ENCODE measurements at regions of chr1 and their contacts with region 1.

Region 1: GRCh38 chr1:59947047-59947938 is 20.7 kb upstream of the CYP2J2 start:
- DNase-seq: peak; percentile 63
- ATAC-seq: peak; percentile 99
- H3K4me3 ChIP-seq: no peak overlapping the region
- H3K27ac ChIP-seq: no peak overlapping the region
- H3K4me1 ChIP-seq: no peaks in the 10 kb centered on the region
- H3K27me3 ChIP-seq: no peaks in the 10 kb centered on the region; the same call in 1 of the 2 replicates
- CTCF ChIP-seq: peak; percentile 83
- POLR2A ChIP-seq: no peak
- RAD21 ChIP-seq: peak; percentile 81

Region 2: GRCh38 chr1:58679463-58679862 is 1267.8 kb before region 1 on chr1:
- CTCF ChIA-PET with region 1: no interaction called
- POLR2A ChIA-PET with region 1: no interaction called
- dilution Hi-C with region 1: no loop called
- in situ Hi-C with region 1: no loop called
- intact Hi-C with region 1: loop called (anchors 5 kb)
- DNase-seq: no peak
- ATAC-seq: no peak
- H3K4me3 ChIP-seq: no peak overlapping the region
- H3K27ac ChIP-seq: no peak overlapping the region
- H3K4me1 ChIP-seq: no peaks in the 10 kb centered on the region
- H3K27me3 ChIP-seq: no peaks in the 10 kb centered on the region
- CTCF ChIP-seq: no peak
- POLR2A ChIP-seq: no peak
- RAD21 ChIP-seq: no peak

Region 3: GRCh38 chr1:58748666-58749065 is 1198.6 kb before region 1 on chr1:
- CTCF ChIA-PET with region 1: no interaction called
- POLR2A ChIA-PET with region 1: no interaction called
- dilution Hi-C with region 1: no loop called
- in situ Hi-C with region 1: loop called (anchors 25 kb)
- intact Hi-C with region 1: loop called (anchors 5 kb)
- DNase-seq: no peak
- ATAC-seq: no peak
- H3K4me3 ChIP-seq: no peak overlapping the region
- H3K27ac ChIP-seq: no peak overlapping the region
- H3K4me1 ChIP-seq: peaks cover 16% of the 10 kb centered on the region
- H3K27me3 ChIP-seq: no peaks in the 10 kb centered on the region
- CTCF ChIP-seq: no peak
- POLR2A ChIP-seq: no peak
- RAD21 ChIP-seq: no peak

Region 4: DNA sequence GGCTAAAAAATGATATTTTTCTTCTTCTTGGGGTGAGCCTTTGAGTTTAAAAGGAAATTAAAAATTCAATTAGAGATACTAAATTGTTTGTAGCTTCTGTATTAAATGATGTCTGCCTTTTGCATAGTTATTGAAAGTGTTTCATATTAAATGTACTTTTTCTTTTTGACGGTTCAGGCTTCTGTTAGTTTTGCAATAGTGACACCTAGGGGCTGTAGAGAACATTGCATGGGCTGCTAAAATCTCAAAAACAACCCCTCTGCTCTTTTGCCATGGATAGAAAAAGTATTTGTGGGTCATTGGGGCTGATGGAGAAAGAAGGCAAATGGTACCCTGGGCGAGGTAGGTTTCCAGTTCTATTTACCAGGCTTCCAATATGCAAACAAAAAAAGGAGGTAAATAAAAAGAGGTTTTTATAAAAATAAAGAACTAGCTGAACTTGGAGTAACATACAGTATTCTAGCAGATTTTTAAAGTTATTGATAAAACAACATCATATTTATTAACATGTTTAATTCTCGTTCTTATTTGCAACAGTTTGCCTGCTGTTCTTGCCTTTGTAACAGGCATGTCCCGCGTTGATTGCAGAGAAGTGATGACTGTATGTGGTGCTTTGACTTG is 248.0 kb before region 1 on chr1:
- CTCF ChIA-PET with region 1: interaction called, 3 read pairs
- POLR2A ChIA-PET with region 1: no interaction called
- dilution Hi-C with region 1: no loop called
- in situ Hi-C with region 1: no loop called
- intact Hi-C with region 1: loop called (anchors 2 kb)
- DNase-seq: peak; percentile 57
- ATAC-seq: 0 out of 2 replicates have a peak, but pooled peaks have one; percentile 19
- H3K4me3 ChIP-seq: no peak overlapping the region
- H3K27ac ChIP-seq: no peak overlapping the region
- H3K4me1 ChIP-seq: peaks cover 21% of the 10 kb centered on the region
- H3K27me3 ChIP-seq: no peaks in the 10 kb centered on the region
- CTCF ChIP-seq: peak; percentile 91
- POLR2A ChIP-seq: 0 out of 2 replicates have a peak, but pooled peaks have one; percentile 35
- RAD21 ChIP-seq: peak; percentile 97

Region 5: DNA sequence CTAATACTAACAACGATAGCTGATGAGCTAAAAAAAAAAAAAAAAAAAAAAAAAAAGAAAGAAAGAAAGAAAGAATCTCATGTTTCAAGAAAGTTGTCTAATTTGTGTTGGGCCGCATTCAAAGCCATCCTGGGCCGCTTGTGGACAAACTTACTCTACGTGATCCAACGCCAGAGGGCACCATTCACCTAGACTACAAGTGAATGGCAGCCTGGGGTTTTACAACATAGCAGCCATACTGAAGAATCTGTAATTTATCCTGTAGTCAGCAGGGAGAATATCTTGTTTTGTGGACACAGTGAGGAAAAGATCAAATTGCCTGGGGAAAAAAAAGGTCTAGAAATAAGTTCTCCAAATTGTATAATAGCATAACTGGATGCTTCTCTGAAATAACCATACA is 67.7 kb before region 1 on chr1:
- CTCF ChIA-PET with region 1: interaction called, 9 read pairs
- POLR2A ChIA-PET with region 1: no interaction called
- dilution Hi-C with region 1: no loop called
- in situ Hi-C with region 1: no loop called
- intact Hi-C with region 1: loop called (anchors 1 kb)
- DNase-seq: peak; percentile 52
- ATAC-seq: peak; percentile 70; the same call in 1 of the 2 replicates
- H3K4me3 ChIP-seq: no peak overlapping the region
- H3K27ac ChIP-seq: no peak overlapping the region
- H3K4me1 ChIP-seq: no peaks in the 10 kb centered on the region
- H3K27me3 ChIP-seq: peaks cover 4% of the 10 kb centered on the region; the same call in 1 of the 2 replicates
- CTCF ChIP-seq: peak; percentile 41
- POLR2A ChIP-seq: no peak
- RAD21 ChIP-seq: peak; percentile 42